PC-3 (cell line): ENCODE measurements at regions of chr3 and their contacts with region 1.

Region 1: DNA sequence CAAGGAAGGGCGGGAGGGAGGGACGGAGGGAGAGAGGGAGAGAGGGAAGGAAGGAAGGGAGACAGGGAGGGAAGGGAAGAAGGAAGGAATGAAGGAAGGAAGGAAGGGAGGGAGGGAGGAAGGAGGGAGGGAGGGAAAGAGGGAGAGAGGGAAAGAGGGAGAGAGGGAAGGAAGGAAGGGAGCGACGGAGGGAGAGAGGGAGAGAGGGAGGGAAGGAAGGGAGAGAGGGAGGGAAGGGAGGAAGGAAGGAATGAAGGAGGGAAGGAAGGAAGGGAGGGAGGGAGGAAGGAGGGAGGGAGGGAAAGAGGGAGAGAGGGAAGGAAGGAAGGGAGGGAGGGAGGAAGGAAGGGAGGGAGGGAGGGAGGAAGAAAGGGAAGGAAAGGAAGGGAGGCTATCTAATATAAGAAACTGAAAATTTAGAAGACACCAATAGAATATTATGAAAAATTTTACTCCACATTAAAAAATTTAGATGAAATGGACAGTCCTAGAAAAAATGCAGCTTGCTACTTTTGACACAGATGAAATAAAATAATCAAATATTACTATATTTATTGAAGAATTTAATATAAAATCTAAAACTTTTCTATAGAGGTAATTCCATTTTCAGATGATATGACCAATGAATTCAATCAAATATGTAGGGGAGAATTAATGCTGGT is 280.3 kb upstream of the SLITRK3 start:
- DNase-seq: no peak
- ATAC-seq: no peak
- H3K4me3 ChIP-seq: no peak overlapping the region
- H3K27ac ChIP-seq: no peak overlapping the region
- H3K4me1 ChIP-seq: no peaks in the 10 kb centered on the region
- H3K27me3 ChIP-seq: no peaks in the 10 kb centered on the region
- CTCF ChIP-seq: no peak

Region 2: DNA sequence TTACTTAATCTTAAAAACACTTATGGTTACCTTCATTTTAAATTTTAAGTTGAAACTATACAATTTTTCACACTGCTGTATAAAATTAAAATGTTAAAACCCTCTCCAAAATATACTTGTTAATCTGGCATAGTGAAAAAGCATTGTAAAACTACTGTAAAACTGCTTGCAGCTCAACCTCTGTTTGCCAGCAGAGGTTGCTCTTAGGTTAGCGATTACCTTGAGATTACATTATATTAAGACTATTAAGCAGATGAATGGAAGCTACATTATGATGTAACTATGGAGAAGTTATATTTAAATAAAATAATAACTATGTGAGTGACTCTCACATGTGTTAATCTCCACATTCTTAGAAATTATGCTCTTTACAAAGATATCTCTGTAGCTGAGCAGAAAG is 136.8 kb before region 1 on chr3:
- CTCF ChIA-PET with region 1: no interaction called
- POLR2A ChIA-PET with region 1: no interaction called
- intact Hi-C with region 1: no loop called
- DNase-seq: peak; percentile 43
- ATAC-seq: peak; percentile 67; the same call in 1 of the 2 replicates
- H3K4me3 ChIP-seq: no peak overlapping the region
- H3K27ac ChIP-seq: no peak overlapping the region
- H3K4me1 ChIP-seq: no peaks in the 10 kb centered on the region
- H3K27me3 ChIP-seq: no peaks in the 10 kb centered on the region
- CTCF ChIP-seq: peak; percentile 68

Region 3: GRCh38 chr3:165434516-165434915 is 42.0 kb before region 1 on chr3:
- CTCF ChIA-PET with region 1: no interaction called
- POLR2A ChIA-PET with region 1: interaction called, 18 read pairs
- intact Hi-C with region 1: no loop called
- DNase-seq: no peak
- ATAC-seq: no peak
- H3K4me3 ChIP-seq: no peak overlapping the region
- H3K27ac ChIP-seq: no peak overlapping the region
- H3K4me1 ChIP-seq: no peaks in the 10 kb centered on the region
- H3K27me3 ChIP-seq: no peaks in the 10 kb centered on the region
- CTCF ChIP-seq: no peak

Region 4: DNA sequence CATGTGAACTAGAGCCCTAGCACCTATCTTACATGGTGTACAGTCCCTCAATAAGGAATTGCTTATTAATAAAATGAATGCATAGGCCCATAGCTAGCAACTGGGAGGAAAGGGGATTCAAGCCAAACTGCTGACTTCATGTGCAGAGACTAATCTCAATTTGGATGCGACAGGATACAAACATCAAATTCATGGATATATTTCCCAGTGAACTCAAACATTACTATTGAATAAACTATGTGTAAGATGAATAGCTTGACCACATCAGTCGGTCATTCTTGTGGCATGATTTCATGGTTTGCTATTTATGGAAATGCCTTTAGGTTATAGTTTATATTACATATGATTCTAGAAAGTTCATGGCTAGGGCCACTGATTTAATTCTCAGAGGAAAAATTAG is 11.8 kb before region 1 on chr3:
- CTCF ChIA-PET with region 1: no interaction called
- POLR2A ChIA-PET with region 1: no interaction called
- intact Hi-C with region 1: no loop called
- DNase-seq: peak; percentile 79
- ATAC-seq: peak; percentile 95
- H3K4me3 ChIP-seq: no peak overlapping the region
- H3K27ac ChIP-seq: peak overlapping the region; percentile 36
- H3K4me1 ChIP-seq: peaks cover 13% of the 10 kb centered on the region
- H3K27me3 ChIP-seq: no peaks in the 10 kb centered on the region
- CTCF ChIP-seq: no peak